PC-9 (cell line): ENCODE measurements at regions of chr11 and their contacts with region 1.

Region 1: GRCh38 chr11:126303623-126304456 is at the start of gene DCPS:
- DNase-seq: peak; percentile 85 to 91
- H3K4me3 ChIP-seq: peak within 1 kb of the TSS; percentile 88
- H3K27ac ChIP-seq: peak within 1 kb of the TSS; percentile 73
- H3K4me1 ChIP-seq: peaks cover 12% of the 10 kb centered on the region
- H3K27me3 ChIP-seq: no peaks in the 10 kb centered on the region
- CTCF ChIP-seq: no peak
- total RNA-seq, gene DCPS: 23.8 and 27.2 TPM in 2 replicates

Region 2: GRCh38 chr11:125923012-125923579 is 380.7 kb before region 1 on chr11:
- CTCF ChIA-PET with region 1: no interaction called
- POLR2A ChIA-PET with region 1: no interaction called
- intact Hi-C with region 1: loop called (anchors 10 kb)
- DNase-seq: peak; percentile 60 to 61
- H3K4me3 ChIP-seq: no peak overlapping the region
- H3K27ac ChIP-seq: no peak overlapping the region
- H3K4me1 ChIP-seq: no peaks in the 10 kb centered on the region
- H3K27me3 ChIP-seq: peaks cover 21% of the 10 kb centered on the region
- CTCF ChIP-seq: peak; percentile 84

Region 3: DNA sequence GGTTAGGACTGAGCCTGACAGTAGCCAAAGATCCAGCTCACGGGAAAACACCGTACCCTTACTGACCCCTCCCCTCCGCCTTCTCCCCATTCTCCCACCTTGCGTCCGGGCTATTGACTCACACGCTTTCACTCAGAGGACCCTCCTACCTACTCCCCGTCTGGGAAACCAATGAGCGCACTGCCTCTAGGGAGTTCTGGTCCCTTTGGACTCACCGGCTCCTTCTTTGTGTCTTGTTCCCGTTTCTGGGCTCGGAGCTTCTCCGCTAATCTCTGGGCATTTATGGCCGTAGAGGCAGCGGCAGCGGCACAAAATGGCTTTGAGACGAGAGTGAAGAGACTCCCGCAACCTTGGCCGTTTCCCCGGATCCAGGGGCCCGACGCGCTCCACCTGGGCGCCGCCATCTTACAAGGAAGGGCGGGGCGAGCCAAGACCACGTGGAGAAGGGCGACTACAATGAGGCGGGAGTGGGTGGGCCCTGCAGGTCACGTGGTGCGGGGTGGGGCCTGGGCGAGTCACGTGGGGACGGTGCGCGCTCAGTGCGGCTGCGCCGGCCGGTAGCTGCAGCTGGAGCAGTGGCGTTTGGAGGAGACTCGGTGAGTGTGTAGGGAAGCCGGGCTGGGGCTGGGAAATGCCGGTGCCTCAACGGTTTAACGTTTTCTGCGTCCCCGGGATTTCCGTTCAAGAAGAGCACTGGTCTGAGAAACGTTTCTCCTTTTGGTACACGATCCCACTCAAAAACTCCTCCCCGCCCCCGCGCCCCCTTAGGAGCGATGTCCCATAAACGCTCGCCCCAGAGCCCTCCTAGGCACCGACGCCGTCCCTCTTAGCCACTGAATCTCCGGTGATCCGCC is 92.4 kb before region 1 on chr11 and contains the starts of genes FAM118B and RPUSD4:
- CTCF ChIA-PET with region 1: no interaction called
- POLR2A ChIA-PET with region 1: no interaction called
- intact Hi-C with region 1: loop called (anchors 1 kb)
- DNase-seq: peak; percentile 87 to 98
- H3K4me3 ChIP-seq: peak within 1 kb of the TSS; percentile 72
- H3K27ac ChIP-seq: peak within 1 kb of the TSS; percentile 43
- H3K4me1 ChIP-seq: peaks cover 18% of the 10 kb centered on the region
- H3K27me3 ChIP-seq: no peaks in the 10 kb centered on the region
- CTCF ChIP-seq: no peak
- total RNA-seq, gene FAM118B: 12.5 and 13.1 TPM in 2 replicates
- total RNA-seq, gene RPUSD4: 25.1 and 26.0 TPM in 2 replicates

Region 4: GRCh38 chr11:126480410-126481302 is 176.8 kb after region 1 on chr11:
- CTCF ChIA-PET with region 1: interaction called, 3 read pairs
- POLR2A ChIA-PET with region 1: interaction called, 26 read pairs
- intact Hi-C with region 1: no loop called
- DNase-seq: peak; percentile 60 to 66
- H3K4me3 ChIP-seq: no peak overlapping the region; the same call in 1 of the 2 replicates
- H3K27ac ChIP-seq: no peak overlapping the region
- H3K4me1 ChIP-seq: peaks cover 12% of the 10 kb centered on the region; the same call in 1 of the 2 replicates
- H3K27me3 ChIP-seq: 0 out of 2 replicates have a peak, but pooled peaks cover 3% of the 10 kb centered on the region
- CTCF ChIP-seq: peak; percentile 96

Region 5: GRCh38 chr11:126488591-126489370 is 184.9 kb after region 1 on chr11:
- CTCF ChIA-PET with region 1: no interaction called
- POLR2A ChIA-PET with region 1: interaction called, 26 read pairs
- intact Hi-C with region 1: no loop called
- DNase-seq: no peak
- H3K4me3 ChIP-seq: no peak overlapping the region
- H3K27ac ChIP-seq: no peak overlapping the region
- H3K4me1 ChIP-seq: peaks cover 10% of the 10 kb centered on the region; the same call in 1 of the 2 replicates
- H3K27me3 ChIP-seq: peaks cover 4% of the 10 kb centered on the region
- CTCF ChIP-seq: no peak